Natural killer cell (primary cell): ENCODE measurements at regions of chr6 and their contacts with region 1.

Region 1: DNA sequence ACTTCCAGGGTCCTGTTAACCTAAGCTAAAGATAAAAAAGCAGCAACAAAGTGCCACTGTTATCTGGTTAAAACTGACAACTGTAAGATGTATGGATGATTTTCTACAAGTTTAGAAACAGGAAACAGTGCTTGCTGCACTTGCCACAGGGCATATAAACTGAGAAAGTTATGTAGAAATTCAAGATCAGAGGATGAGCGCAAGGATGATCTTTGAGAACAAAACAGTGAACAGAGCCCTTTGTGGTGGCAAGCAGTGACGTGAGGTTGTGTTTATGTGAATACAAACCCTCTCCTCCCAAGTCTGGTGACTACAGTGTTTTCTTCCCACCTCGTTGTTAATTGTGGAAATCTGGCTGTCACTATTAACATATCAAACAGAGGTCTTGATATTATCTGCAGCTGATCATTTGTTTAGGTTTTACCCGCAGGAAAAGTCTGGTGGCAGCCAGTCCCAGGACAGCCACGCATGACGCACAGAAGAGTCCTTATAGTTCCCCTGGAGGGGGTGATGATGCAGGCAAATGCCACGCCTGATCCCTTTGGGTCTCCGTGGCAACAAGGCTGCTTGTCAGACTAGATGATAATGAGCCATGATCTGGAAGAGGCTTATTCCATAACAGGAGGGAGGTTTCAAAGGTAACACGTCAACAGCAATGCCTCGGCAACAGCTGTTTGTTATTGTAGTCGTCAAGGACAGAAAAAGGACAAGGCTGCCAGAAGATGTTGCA is 43.1 kb upstream of the TNFAIP3 start:
- DNase-seq: peak; percentile 65 to 96
- ATAC-seq: peak; percentile 51 to 78 (median 73)
- H3K4me3 ChIP-seq: no peak overlapping the region
- H3K4me3 Mint-ChIP-seq: peak overlapping the region; percentile 29
- H3K27ac ChIP-seq: peak overlapping the region; percentile 85
- H3K27ac Mint-ChIP-seq: peak overlapping the region; percentile 92 to 99
- H3K4me1 ChIP-seq: peaks cover 52% of the 10 kb centered on the region
- H3K4me1 Mint-ChIP-seq: peaks cover 76 to 77% of the 10 kb centered on the region in 2 donors
- H3K27me3 ChIP-seq: no peaks in the 10 kb centered on the region
- H3K27me3 Mint-ChIP-seq: no peaks in the 10 kb centered on the region
- CTCF ChIP-seq: no peak

Region 2: DNA sequence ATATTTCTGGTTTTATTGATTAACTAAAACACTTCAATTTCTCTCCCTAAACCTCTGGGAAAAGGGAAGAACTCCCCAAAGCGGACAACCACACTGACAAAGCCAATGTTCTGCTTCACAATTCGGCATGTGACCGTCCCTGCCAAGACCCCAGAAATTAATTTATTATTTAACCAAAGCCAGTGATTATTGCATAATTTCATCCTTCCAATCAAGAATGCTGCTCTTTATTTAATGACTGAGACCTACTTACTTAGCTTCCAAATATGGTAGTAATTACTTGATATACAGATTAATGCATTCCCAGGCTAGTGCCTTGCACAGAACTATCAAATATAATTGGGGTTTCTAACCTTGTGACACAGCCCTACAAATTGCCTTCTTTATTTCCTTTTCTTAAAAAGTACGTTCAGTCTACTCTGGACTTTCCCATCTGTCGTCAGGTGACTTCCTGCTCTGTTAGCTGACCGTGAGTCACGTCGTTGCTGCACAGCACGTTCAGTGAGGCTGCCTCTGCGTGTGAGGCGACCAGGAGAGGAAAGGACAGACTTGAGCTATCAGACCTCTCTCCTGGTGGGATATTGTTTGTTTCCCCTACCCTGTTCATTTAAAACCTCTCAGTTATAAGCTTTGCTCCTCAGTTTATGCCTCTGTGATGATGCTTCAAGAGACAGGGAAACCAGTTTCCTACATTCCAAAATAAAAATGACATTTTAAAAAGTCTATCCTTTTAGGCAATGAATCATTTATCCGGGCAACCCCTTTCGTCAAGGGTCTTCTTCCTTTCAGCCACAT is 12.7 kb before region 1 on chr6:
- intact Hi-C with region 1: loop called (anchors 1 kb)
- DNase-seq: peak; percentile 71 to 95
- ATAC-seq: peak; percentile 86 to 96 (median 93)
- H3K4me3 ChIP-seq: no peak overlapping the region
- H3K4me3 Mint-ChIP-seq: peak overlapping the region; percentile 77
- H3K27ac ChIP-seq: peak overlapping the region; percentile 77
- H3K27ac Mint-ChIP-seq: peak overlapping the region; percentile 79 to 94
- H3K4me1 ChIP-seq: peaks cover 23% of the 10 kb centered on the region
- H3K4me1 Mint-ChIP-seq: peaks cover 32 to 33% of the 10 kb centered on the region in 2 donors
- H3K27me3 ChIP-seq: no peaks in the 10 kb centered on the region
- H3K27me3 Mint-ChIP-seq: no peaks in the 10 kb centered on the region
- CTCF ChIP-seq: no peak

Region 3: DNA sequence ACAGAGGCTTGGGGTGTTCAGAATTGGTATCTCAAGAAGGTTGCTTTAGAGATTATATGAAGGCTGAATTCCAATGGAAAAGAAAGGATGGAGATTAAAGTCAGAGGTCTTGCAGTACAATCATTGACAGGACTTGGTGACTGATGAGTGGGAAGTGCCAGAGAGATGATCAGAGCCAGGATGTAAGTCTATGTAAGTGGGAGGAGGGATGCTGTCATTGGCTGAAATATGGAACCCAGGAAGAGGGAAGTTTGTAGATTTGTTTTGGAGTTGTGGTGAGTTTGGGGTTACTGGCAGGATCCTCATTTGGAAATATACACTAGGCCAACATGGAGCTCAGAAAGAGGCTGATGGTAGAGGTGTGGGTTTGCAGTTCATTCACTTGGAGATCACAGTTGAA is 19.2 kb after region 1 on chr6:
- intact Hi-C with region 1: no loop called
- DNase-seq: no peak
- ATAC-seq: no peak
- H3K4me3 ChIP-seq: no peak overlapping the region
- H3K4me3 Mint-ChIP-seq: no peak overlapping the region
- H3K27ac ChIP-seq: no peak overlapping the region
- H3K27ac Mint-ChIP-seq: no peak overlapping the region
- H3K4me1 ChIP-seq: peaks cover 15% of the 10 kb centered on the region
- H3K4me1 Mint-ChIP-seq: peaks cover 0 to 5% of the 10 kb centered on the region in 2 donors
- H3K27me3 ChIP-seq: no peaks in the 10 kb centered on the region
- H3K27me3 Mint-ChIP-seq: peaks cover 6 to 8% of the 10 kb centered on the region in 2 donors
- CTCF ChIP-seq: no peak

Region 4: GRCh38 chr6:137975188-137975940 is 151.4 kb after region 1 on chr6:
- intact Hi-C with region 1: loop called (anchors 1 kb)
- DNase-seq: peak in 1 of 2 donors; percentile 82
- ATAC-seq: peak; percentile 84 to 90 (median 87)
- H3K4me3 ChIP-seq: peak overlapping the region; percentile 15
- H3K4me3 Mint-ChIP-seq: peak overlapping the region; percentile 90
- H3K27ac ChIP-seq: peak overlapping the region; percentile 93
- H3K27ac Mint-ChIP-seq: peak overlapping the region; percentile 87 to 97
- H3K4me1 ChIP-seq: peaks cover 66% of the 10 kb centered on the region
- H3K4me1 Mint-ChIP-seq: peaks cover 64 to 74% of the 10 kb centered on the region in 2 donors
- H3K27me3 ChIP-seq: no peaks in the 10 kb centered on the region
- H3K27me3 Mint-ChIP-seq: no peaks in the 10 kb centered on the region
- CTCF ChIP-seq: peak; percentile 60